ENCODE measurements at regions of chr12 and their contacts with region 1.

Region 1: GRCh38 chr12:115752913-115753726 is 524.4 kb downstream of the MED13L start:
- DNase-seq: peak; percentile 58 to 74
- ATAC-seq: peak; percentile 98
- H3K4me3 ChIP-seq: no peak overlapping the region
- H3K27ac ChIP-seq: peak overlapping the region in 1 of 2 experiments; percentile 7; a peak in 1 of 6 replicates
- H3K4me1 ChIP-seq: peaks cover 7% of the 10 kb centered on the region; the same call in 2 of the 3 replicates
- CTCF ChIP-seq: peak; percentile 82
- EP300 ChIP-seq: no peak
- POLR2A ChIP-seq: no peak
- RAD21 ChIP-seq: peak; percentile 92 to 94

Region 2: GRCh38 chr12:114655934-114656749 is 1097.0 kb before region 1 on chr12:
- CTCF ChIA-PET with region 1: interaction called, 113 read pairs
- POLR2A ChIA-PET with region 1: no interaction called
- DNase-seq: peak; percentile 71 to 95
- ATAC-seq: peak; percentile 92 to 94
- H3K4me3 ChIP-seq: no peak overlapping the region
- H3K27ac ChIP-seq: peak overlapping the region; percentile 83 to 85
- H3K4me1 ChIP-seq: peaks cover 38% of the 10 kb centered on the region
- CTCF ChIP-seq: no peak
- EP300 ChIP-seq: peak; percentile 96 to 99
- POLR2A ChIP-seq: no peak
- RAD21 ChIP-seq: peak in 1 of 2 experiments; percentile 37; a peak in 3 of 5 replicates

Region 3: GRCh38 chr12:114662512-114663177 is 1090.5 kb before region 1 on chr12:
- CTCF ChIA-PET with region 1: interaction called, 113 read pairs
- POLR2A ChIA-PET with region 1: interaction called, 7 read pairs
- DNase-seq: peak; percentile 76 to 90
- ATAC-seq: peak; percentile 73 to 79
- H3K4me3 ChIP-seq: no peak overlapping the region
- H3K27ac ChIP-seq: peak overlapping the region; percentile 83 to 85
- H3K4me1 ChIP-seq: peaks cover 38% of the 10 kb centered on the region
- CTCF ChIP-seq: peak; percentile 95
- EP300 ChIP-seq: peak; percentile 52 to 54; a peak in 3 of 5 replicates
- POLR2A ChIP-seq: no peak
- RAD21 ChIP-seq: peak; percentile 97 to 99

Region 4: GRCh38 chr12:114668151-114668885 is 1084.8 kb before region 1 on chr12:
- CTCF ChIA-PET with region 1: interaction called, 113 read pairs
- POLR2A ChIA-PET with region 1: interaction called, 7 read pairs
- DNase-seq: peak; percentile 91 to 94
- ATAC-seq: peak; percentile 85 to 93
- H3K4me3 ChIP-seq: peak overlapping the region; percentile 57
- H3K27ac ChIP-seq: peak overlapping the region; percentile 84 to 92
- H3K4me1 ChIP-seq: peaks cover 22% of the 10 kb centered on the region; the same call in 2 of the 3 replicates
- CTCF ChIP-seq: peak; percentile 63
- EP300 ChIP-seq: no peak
- POLR2A ChIP-seq: no peak
- RAD21 ChIP-seq: peak; percentile 89 to 96

Region 5: DNA sequence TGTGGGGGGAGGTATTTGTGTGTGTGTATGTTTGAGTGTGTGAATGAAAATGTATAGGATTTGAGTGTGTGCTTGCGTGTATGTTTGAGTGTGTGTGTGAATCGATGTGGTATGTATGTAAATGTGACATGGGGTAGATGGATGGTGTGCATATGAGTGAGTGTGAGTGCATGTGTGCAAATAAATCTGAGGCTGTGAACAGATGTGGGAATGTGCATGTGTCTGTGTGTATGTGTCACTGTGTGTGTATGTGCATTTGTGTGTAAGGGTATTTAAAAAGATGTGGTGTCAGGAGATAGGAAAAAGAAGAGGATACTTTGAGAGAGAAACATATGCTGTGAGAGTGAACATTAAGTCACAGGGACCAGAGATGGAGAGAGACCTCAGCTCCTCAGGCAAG is 15.2 kb before region 1 on chr12:
- CTCF ChIA-PET with region 1: interaction called, 21 read pairs
- POLR2A ChIA-PET with region 1: no interaction called
- DNase-seq: no peak
- ATAC-seq: no peak
- H3K4me3 ChIP-seq: no peak overlapping the region
- H3K27ac ChIP-seq: no peak overlapping the region
- H3K4me1 ChIP-seq: no peaks in the 10 kb centered on the region
- CTCF ChIP-seq: no peak
- EP300 ChIP-seq: no peak
- POLR2A ChIP-seq: no peak
- RAD21 ChIP-seq: no peak

Region 6: DNA sequence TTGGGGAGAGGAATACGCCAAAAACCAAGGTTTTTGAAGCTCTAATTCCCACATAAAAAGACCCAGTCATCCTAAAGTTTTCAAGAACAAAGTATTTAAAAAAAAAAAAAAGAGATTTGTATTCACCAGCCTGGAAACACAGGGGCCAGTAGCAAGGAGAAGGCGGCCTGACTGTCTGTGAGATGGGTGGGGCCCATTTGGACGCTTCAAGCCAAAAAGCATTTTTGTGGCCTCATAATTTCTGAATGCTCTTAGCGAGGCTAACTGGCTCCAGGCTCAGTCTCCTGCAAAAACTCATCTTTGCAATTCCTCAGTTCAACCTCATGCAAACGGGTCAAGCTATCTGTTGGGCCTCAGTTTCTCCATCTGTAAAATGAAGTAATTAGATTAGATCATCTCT is 10.3 kb after region 1 on chr12:
- CTCF ChIA-PET with region 1: interaction called, 16 read pairs
- POLR2A ChIA-PET with region 1: no interaction called
- DNase-seq: no peak
- ATAC-seq: no peak
- H3K4me3 ChIP-seq: no peak overlapping the region
- H3K27ac ChIP-seq: peak overlapping the region in 1 of 2 experiments; percentile 8; a peak in 1 of 6 replicates
- H3K4me1 ChIP-seq: peaks cover 18% of the 10 kb centered on the region; the same call in 2 of the 3 replicates
- CTCF ChIP-seq: no peak
- EP300 ChIP-seq: no peak
- POLR2A ChIP-seq: no peak
- RAD21 ChIP-seq: no peak

Measured in A549 (cell line).